ENCODE measurements at regions of chr12 and their contacts with region 1.

Region 1: GRCh38 chr12:111753144-111753881 is 13.4 kb upstream of the ALDH2 start:
- DNase-seq: peak; percentile 59
- H3K4me3 ChIP-seq: no peak overlapping the region
- H3K27ac ChIP-seq: no peak overlapping the region
- H3K4me1 ChIP-seq: peaks cover 11% of the 10 kb centered on the region
- H3K27me3 ChIP-seq: no peaks in the 10 kb centered on the region
- CTCF ChIP-seq: peak; percentile 75 to 85
- POLR2A ChIP-seq: no peak

Region 2: GRCh38 chr12:111685744-111686517 is 67.4 kb before region 1 on chr12 and contains the starts of genes ACAD10 and BRAP:
- CTCF ChIA-PET with region 1: no interaction called
- POLR2A ChIA-PET with region 1: no interaction called
- dilution Hi-C with region 1: no loop called
- intact Hi-C with region 1: loop called (anchors 2 kb)
- DNase-seq: peak; percentile 98
- H3K4me3 ChIP-seq: peak within 1 kb of the TSS; percentile 47 to 85 (median 74)
- H3K27ac ChIP-seq: peak within 1 kb of the TSS; percentile 28
- H3K4me1 ChIP-seq: peaks cover 19% of the 10 kb centered on the region
- H3K27me3 ChIP-seq: no peaks in the 10 kb centered on the region
- CTCF ChIP-seq: no peak
- POLR2A ChIP-seq: peak; percentile 97
- total RNA-seq, gene ACAD10: 14.9 and 16.3 TPM in 2 replicates
- total RNA-seq, gene BRAP: 16.5 and 18.6 TPM in 2 replicates

Region 3: GRCh38 chr12:111766608-111767361 is 13.5 kb after region 1 on chr12 and contains the start of gene ALDH2:
- CTCF ChIA-PET with region 1: interaction called, 11 read pairs
- POLR2A ChIA-PET with region 1: no interaction called
- dilution Hi-C with region 1: no loop called
- intact Hi-C with region 1: loop called (anchors 2 kb)
- DNase-seq: peak; percentile 77
- H3K4me3 ChIP-seq: peak within 1 kb of the TSS; percentile 58 to 75 (median 68)
- H3K27ac ChIP-seq: peak within 1 kb of the TSS; percentile 58
- H3K4me1 ChIP-seq: peaks cover 18% of the 10 kb centered on the region
- H3K27me3 ChIP-seq: peaks cover 0 to 3% of the 10 kb centered on the region in 2 experiments
- CTCF ChIP-seq: no peak
- POLR2A ChIP-seq: peak; percentile 82
- total RNA-seq, gene ALDH2: 71.4 and 86.5 TPM in 2 replicates

Region 4: GRCh38 chr12:111775205-111776193 is 22.2 kb after region 1 on chr12:
- CTCF ChIA-PET with region 1: interaction called, 5 read pairs
- POLR2A ChIA-PET with region 1: interaction called, 5 read pairs
- dilution Hi-C with region 1: no loop called
- intact Hi-C with region 1: loop called (anchors 2 kb)
- DNase-seq: peak; percentile 98
- H3K4me3 ChIP-seq: peak overlapping the region in 1 of 3 experiments; percentile 9
- H3K27ac ChIP-seq: peak overlapping the region; percentile 54
- H3K4me1 ChIP-seq: peaks cover 16% of the 10 kb centered on the region
- H3K27me3 ChIP-seq: no peaks in the 10 kb centered on the region
- CTCF ChIP-seq: no peak
- POLR2A ChIP-seq: peak; percentile 44

Region 5: GRCh38 chr12:111788178-111788654 is 34.9 kb after region 1 on chr12:
- CTCF ChIA-PET with region 1: interaction called, 12 read pairs
- POLR2A ChIA-PET with region 1: no interaction called
- dilution Hi-C with region 1: no loop called
- intact Hi-C with region 1: no loop called
- DNase-seq: no peak
- H3K4me3 ChIP-seq: no peak overlapping the region
- H3K27ac ChIP-seq: no peak overlapping the region
- H3K4me1 ChIP-seq: peaks cover 10% of the 10 kb centered on the region
- H3K27me3 ChIP-seq: no peaks in the 10 kb centered on the region
- CTCF ChIP-seq: peak; percentile 4 to 35
- POLR2A ChIP-seq: no peak